ENCODE measurements at regions of chr2 and their contacts with region 1.

Region 1: GRCh38 chr2:160406591-160407392 is 86.8 kb downstream of the RBMS1 start:
- DNase-seq: peak; percentile 78
- H3K4me3 Mint-ChIP-seq: peak overlapping the region; percentile 82
- H3K27ac Mint-ChIP-seq: peak overlapping the region; percentile 94
- H3K4me1 Mint-ChIP-seq: peaks cover 80% of the 10 kb centered on the region
- H3K27me3 Mint-ChIP-seq: no peaks in the 10 kb centered on the region

Region 2: GRCh38 chr2:160039166-160039903 is 367.5 kb before region 1 on chr2:
- CTCF ChIA-PET with region 1: no interaction called
- POLR2A ChIA-PET with region 1: no interaction called
- intact Hi-C with region 1: no loop called
- DNase-seq: no peak
- H3K4me3 Mint-ChIP-seq: no peak overlapping the region
- H3K27ac Mint-ChIP-seq: no peak overlapping the region
- H3K4me1 Mint-ChIP-seq: peaks cover 15% of the 10 kb centered on the region
- H3K27me3 Mint-ChIP-seq: peaks cover 10% of the 10 kb centered on the region

Region 3: GRCh38 chr2:160269803-160270570 is 136.8 kb before region 1 on chr2:
- CTCF ChIA-PET with region 1: interaction called, 3 read pairs
- POLR2A ChIA-PET with region 1: no interaction called
- intact Hi-C with region 1: loop called (anchors 5 kb)
- DNase-seq: peak; percentile 81
- H3K4me3 Mint-ChIP-seq: peak overlapping the region; percentile 63
- H3K27ac Mint-ChIP-seq: peak overlapping the region; percentile 28
- H3K4me1 Mint-ChIP-seq: peaks cover 45% of the 10 kb centered on the region
- H3K27me3 Mint-ChIP-seq: peaks cover 5% of the 10 kb centered on the region

Region 4: DNA sequence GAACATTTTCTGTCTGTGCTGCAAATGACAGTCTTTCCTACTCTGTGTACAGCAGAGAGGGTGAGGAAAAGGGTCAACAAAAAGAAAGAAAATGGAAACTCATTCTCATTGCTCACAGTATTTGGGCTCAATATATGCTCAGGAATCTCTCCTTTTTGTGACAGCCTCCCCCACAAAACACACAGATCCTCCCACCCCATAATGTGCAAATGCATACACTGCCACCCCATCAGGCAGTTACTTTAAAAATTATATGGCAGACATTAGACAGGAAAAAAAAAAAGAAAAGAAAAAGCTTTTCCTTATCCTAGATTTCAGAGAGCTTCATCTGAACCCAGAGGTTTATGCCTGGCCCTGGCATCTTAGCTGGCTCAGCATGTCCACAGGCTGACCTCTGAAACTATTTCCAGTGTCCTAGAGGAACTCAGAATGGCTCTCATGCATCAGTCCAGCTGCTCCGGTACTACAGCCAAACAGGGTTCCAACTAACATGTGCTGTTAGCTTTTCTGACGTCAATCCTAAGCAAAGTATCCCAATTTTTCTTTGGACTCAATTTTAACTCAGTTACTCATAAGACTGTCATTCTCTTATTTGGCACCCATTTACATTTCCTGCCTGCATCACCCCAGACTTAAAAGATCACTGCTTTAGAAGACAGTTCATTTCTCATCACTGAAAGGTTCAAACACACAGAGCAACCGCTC is 19.1 kb before region 1 on chr2:
- CTCF ChIA-PET with region 1: interaction called, 3 read pairs
- POLR2A ChIA-PET with region 1: interaction called, 3 read pairs
- intact Hi-C with region 1: loop called (anchors 1 kb)
- DNase-seq: no peak
- H3K4me3 Mint-ChIP-seq: no peak overlapping the region
- H3K27ac Mint-ChIP-seq: peak overlapping the region; percentile 63
- H3K4me1 Mint-ChIP-seq: peaks cover 78% of the 10 kb centered on the region
- H3K27me3 Mint-ChIP-seq: no peaks in the 10 kb centered on the region

Region 5: GRCh38 chr2:160429248-160430000 is 22.6 kb after region 1 on chr2:
- CTCF ChIA-PET with region 1: interaction called, 15 read pairs
- POLR2A ChIA-PET with region 1: interaction called, 11 read pairs
- intact Hi-C with region 1: loop called (anchors 1 kb)
- DNase-seq: no peak
- H3K4me3 Mint-ChIP-seq: no peak overlapping the region
- H3K27ac Mint-ChIP-seq: peak overlapping the region; percentile 69
- H3K4me1 Mint-ChIP-seq: peaks cover 58% of the 10 kb centered on the region
- H3K27me3 Mint-ChIP-seq: no peaks in the 10 kb centered on the region

Region 6: GRCh38 chr2:160445673-160446072 is 38.9 kb after region 1 on chr2:
- CTCF ChIA-PET with region 1: no interaction called
- POLR2A ChIA-PET with region 1: no interaction called
- intact Hi-C with region 1: no loop called
- DNase-seq: no peak
- H3K4me3 Mint-ChIP-seq: no peak overlapping the region
- H3K27ac Mint-ChIP-seq: no peak overlapping the region
- H3K4me1 Mint-ChIP-seq: peaks cover 7% of the 10 kb centered on the region
- H3K27me3 Mint-ChIP-seq: no peaks in the 10 kb centered on the region

Region 7: GRCh38 chr2:160652236-160652635 is 245.4 kb after region 1 on chr2:
- CTCF ChIA-PET with region 1: no interaction called
- POLR2A ChIA-PET with region 1: no interaction called
- intact Hi-C with region 1: loop called (anchors 1 kb)
- DNase-seq: peak; percentile 82
- H3K4me3 Mint-ChIP-seq: no peak overlapping the region
- H3K27ac Mint-ChIP-seq: peak overlapping the region; percentile 30
- H3K4me1 Mint-ChIP-seq: peaks cover 26% of the 10 kb centered on the region
- H3K27me3 Mint-ChIP-seq: peaks cover 1% of the 10 kb centered on the region

Region 8: DNA sequence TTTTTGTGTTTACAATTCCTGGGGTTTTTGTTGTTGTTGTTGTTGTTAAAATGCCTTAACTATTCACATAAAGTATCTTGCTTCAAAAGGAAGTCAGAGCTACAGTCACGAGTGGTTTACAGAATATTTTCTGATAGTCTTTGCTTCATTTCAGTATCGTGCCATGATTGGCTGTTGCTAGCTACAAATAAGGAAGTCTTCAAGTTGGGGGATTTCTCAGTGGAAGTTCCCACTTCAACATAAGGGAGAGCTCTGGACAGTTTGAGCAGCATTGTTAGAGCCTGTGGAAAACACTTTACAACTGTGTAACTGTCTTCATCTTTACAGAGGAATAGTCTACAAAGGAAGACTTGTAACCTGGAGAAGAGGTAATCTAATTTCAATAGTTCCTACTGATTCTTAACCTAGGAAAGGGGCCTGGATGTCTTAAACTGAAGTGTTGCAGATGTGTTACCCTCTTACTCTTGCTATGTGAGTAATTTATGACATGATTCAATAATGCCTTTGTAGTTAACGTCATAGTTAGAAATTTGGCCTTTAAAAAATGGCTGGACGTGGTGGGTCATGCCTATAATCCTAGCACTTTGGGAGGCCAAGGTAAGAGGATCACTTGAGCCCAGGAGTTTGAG is 730.0 kb after region 1 on chr2:
- CTCF ChIA-PET with region 1: no interaction called
- POLR2A ChIA-PET with region 1: no interaction called
- intact Hi-C with region 1: loop called (anchors 10 kb)
- DNase-seq: peak; percentile 35
- H3K4me3 Mint-ChIP-seq: peak overlapping the region; percentile 96
- H3K27ac Mint-ChIP-seq: peak overlapping the region; percentile 100
- H3K4me1 Mint-ChIP-seq: peaks cover 45% of the 10 kb centered on the region
- H3K27me3 Mint-ChIP-seq: no peaks in the 10 kb centered on the region